ENCODE measurements at regions of chr4 and their contacts with region 1.

Region 1: GRCh38 chr4:101356928-101357327 is 9.6 kb upstream of the PPP3CA start:
- DNase-seq: peak; percentile 98
- H3K4me3 ChIP-seq: peak overlapping the region in 2 of 3 experiments; percentile 14 to 41
- H3K27ac ChIP-seq: peak overlapping the region; percentile 100
- H3K4me1 ChIP-seq: peaks cover 37% of the 10 kb centered on the region
- H3K27me3 ChIP-seq: no peaks in the 10 kb centered on the region
- CTCF ChIP-seq: no peak

Region 2: DNA sequence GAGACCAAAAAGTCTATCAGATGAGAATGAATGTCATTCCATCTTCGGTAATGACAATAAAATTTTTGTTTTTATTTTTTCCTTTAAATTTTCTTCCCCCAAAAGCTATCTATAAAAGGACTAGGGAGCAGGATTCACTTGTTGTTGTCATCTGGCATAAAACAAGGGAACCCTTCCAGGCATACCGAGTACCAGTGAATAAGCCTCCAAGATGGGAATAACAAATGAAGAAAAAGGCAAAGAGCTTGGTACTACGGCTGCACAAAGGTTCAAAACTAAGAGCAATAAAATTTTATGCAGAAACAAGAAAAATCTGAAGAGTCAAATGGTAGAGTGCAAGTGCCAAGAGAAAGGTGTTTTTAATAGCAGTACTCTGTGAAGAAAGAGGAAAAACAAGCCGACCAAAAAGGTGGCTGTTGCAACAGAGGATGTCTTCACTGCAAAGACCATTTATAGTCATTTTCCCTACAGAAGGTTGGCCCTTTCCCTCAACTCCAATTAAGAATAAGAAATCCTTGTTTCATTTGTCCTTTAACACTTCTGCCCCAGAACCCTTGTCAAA is 35.4 kb before region 1 on chr4:
- CTCF ChIA-PET with region 1: no interaction called
- dilution Hi-C with region 1: no loop called
- in situ Hi-C with region 1: no loop called
- intact Hi-C with region 1: no loop called
- DNase-seq: peak; percentile 23
- H3K4me3 ChIP-seq: no peak overlapping the region
- H3K27ac ChIP-seq: no peak overlapping the region
- H3K4me1 ChIP-seq: peaks cover 5% of the 10 kb centered on the region
- H3K27me3 ChIP-seq: no peaks in the 10 kb centered on the region
- CTCF ChIP-seq: no peak

Region 3: DNA sequence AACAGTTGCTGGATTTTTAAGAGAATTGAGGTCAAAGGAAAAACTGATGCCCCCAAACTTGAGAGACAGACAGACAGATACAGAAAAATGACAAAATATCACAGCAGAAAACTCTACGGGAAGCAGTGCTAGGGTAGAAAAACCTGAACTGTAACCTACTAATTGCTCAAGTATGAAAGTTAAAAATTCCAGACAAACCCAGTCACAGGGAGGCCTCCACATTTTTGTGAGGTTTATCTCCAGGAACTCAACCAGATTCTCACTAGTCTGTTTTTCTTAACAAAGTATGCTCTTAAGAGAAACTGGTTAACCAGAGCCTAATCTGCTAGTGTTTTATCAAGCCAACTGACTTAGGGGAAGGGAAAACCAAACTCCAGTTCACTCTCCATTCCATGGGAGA is 10.3 kb after region 1 on chr4:
- CTCF ChIA-PET with region 1: no interaction called
- dilution Hi-C with region 1: no loop called
- in situ Hi-C with region 1: no loop called
- intact Hi-C with region 1: loop called (anchors 1 kb)
- DNase-seq: peak; percentile 79
- H3K4me3 ChIP-seq: no peak overlapping the region
- H3K27ac ChIP-seq: peak overlapping the region; percentile 86
- H3K4me1 ChIP-seq: peaks cover 20% of the 10 kb centered on the region
- H3K27me3 ChIP-seq: no peaks in the 10 kb centered on the region
- CTCF ChIP-seq: no peak

Measured in mammary epithelial cell (primary cell).